Transverse colon (tissue), 4 donors: ENCODE measurements at regions of chrX and their contacts with region 1.

Region 1: DNA sequence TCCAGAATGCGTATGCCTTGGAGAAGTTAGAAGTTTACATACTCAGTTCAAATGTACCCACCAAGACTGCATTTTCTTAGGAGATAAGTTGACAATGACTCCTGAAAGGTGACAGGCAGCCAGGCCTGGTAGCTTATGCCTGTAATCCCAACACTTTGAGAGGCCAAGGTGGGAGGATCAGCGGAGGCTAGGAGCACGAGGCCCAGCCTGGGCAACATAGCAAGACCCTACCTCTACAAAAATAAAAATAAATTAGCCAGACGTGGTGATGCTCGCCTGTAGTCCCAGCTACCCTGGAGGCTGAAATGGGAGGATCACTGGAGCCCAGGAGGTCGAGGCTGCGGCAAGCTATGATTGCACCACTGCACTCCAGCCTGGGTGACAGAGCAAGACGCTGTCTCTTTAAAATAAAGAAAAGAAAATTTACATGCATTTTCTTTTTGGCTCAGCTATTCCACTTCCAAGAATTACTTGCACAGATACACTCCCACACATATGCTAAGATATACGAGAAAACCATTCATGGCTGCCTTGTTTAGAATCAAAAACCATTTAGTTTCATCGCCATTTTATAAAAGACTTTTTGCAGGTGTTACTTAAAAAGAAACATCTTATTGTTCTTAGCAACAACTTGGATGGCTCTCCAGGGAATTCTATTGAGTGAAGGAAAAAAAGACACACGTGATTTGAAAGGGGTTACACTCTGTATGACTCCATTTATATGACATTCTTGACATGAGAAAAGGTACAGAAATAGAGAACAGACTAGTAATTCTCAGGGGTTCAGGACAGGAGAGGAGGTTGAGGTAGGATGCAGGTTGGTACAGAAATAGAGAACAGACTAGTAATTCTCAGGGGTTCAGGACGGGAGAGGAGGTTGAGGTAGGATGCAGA is 66.3 kb downstream of the DHRSX start:
- DNase-seq: no peak
- H3K4me3 ChIP-seq: no peak overlapping the region
- H3K27ac ChIP-seq: no peak overlapping the region
- H3K4me1 ChIP-seq: no peaks in the 10 kb centered on the region
- H3K27me3 ChIP-seq: no peaks in the 10 kb centered on the region
- CTCF ChIP-seq: no peak
- EP300 ChIP-seq: no peak
- POLR2A ChIP-seq: no peak

Region 2: GRCh38 chrX:2461711-2462016 is 27.1 kb after region 1 on chrX:
- in situ Hi-C with region 1: no loop called
- intact Hi-C with region 1: loop called (anchors 1 kb)
- DNase-seq: no peak
- H3K4me3 ChIP-seq: no peak overlapping the region
- H3K27ac ChIP-seq: no peak overlapping the region
- H3K4me1 ChIP-seq: peaks cover 0 to 3% (median 0%) of the 10 kb centered on the region in 4 donors
- H3K27me3 ChIP-seq: no peaks in the 10 kb centered on the region
- CTCF ChIP-seq: no peak
- EP300 ChIP-seq: no peak
- POLR2A ChIP-seq: no peak